ENCODE measurements at regions of chr2 and their contacts with region 1.

Region 1: GRCh38 chr2:204325468-204325867 is 219.8 kb upstream of the PARD3B start:
- DNase-seq: peak; percentile 58
- H3K4me3 ChIP-seq: no peak overlapping the region
- H3K27ac ChIP-seq: no peak overlapping the region
- H3K4me1 ChIP-seq: no peaks in the 10 kb centered on the region
- H3K27me3 ChIP-seq: no peaks in the 10 kb centered on the region
- CTCF ChIP-seq: peak; percentile 71 to 90 (median 88)
- POLR2A ChIP-seq: no peak

Region 2: DNA sequence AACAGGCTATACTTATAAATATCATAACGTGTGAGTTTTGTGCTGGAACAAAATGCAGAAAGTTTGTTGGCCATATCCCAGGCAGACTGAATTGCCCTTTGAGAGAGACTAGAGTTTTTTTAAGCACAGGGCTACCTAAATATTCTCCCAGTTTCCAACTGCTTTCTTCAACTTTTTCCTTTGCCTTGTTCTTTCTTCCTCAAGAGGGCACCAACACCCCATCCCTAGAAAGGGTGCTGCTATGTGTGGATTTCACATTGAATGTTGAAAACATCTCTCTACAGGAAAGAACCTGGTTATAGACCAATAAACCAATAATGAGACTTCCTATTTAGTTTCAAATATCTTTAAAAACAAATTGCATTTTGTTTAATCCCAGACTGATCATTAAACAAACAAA is 301.0 kb before region 1 on chr2:
- intact Hi-C with region 1: loop called (anchors 5 kb)
- DNase-seq: peak; percentile 37
- H3K4me3 ChIP-seq: no peak overlapping the region
- H3K27ac ChIP-seq: no peak overlapping the region
- H3K4me1 ChIP-seq: no peaks in the 10 kb centered on the region
- H3K27me3 ChIP-seq: no peaks in the 10 kb centered on the region
- CTCF ChIP-seq: peak in 3 of 4 experiments; percentile 40 to 72 (median 61)
- POLR2A ChIP-seq: no peak

Region 3: DNA sequence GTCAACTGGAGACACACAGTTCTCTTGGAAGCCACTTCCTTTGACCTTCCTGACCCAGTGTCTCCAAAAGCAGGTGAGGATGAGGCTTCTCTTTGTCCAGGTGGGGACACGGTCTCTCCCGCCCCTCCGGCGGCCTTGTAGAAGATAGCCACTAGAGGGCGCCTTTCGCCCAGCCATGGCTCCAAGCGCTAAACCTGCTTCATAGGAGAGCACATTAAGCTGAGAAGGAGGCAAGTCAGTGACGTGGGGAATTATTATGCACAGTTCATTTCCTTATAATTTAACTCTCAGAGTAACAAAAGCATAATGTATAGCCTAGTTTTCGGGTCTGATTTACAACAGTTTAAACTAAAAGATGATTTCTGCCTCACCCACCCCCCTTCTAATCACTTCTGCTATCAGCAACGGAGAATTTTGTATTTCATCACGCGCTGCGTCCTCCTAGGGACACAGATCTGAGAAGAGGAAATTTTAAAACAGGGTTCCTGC is 180.2 kb before region 1 on chr2:
- intact Hi-C with region 1: loop called (anchors 10 kb)
- DNase-seq: peak; percentile 67
- H3K4me3 ChIP-seq: peak overlapping the region; percentile 2 to 28
- H3K27ac ChIP-seq: peak overlapping the region in 1 of 2 donors; percentile 22
- H3K4me1 ChIP-seq: no peaks in the 10 kb centered on the region
- H3K27me3 ChIP-seq: no peaks in the 10 kb centered on the region
- CTCF ChIP-seq: peak; percentile 85 to 90 (median 88)
- POLR2A ChIP-seq: no peak

Region 4: GRCh38 chr2:204468746-204469429 is 143.4 kb after region 1 on chr2:
- intact Hi-C with region 1: no loop called
- DNase-seq: no peak
- H3K4me3 ChIP-seq: no peak overlapping the region
- H3K27ac ChIP-seq: no peak overlapping the region
- H3K4me1 ChIP-seq: no peaks in the 10 kb centered on the region
- H3K27me3 ChIP-seq: no peaks in the 10 kb centered on the region
- CTCF ChIP-seq: no peak
- POLR2A ChIP-seq: no peak

Region 5: GRCh38 chr2:204691911-204692510 is 366.5 kb after region 1 on chr2:
- intact Hi-C with region 1: loop called (anchors 5 kb)
- DNase-seq: peak; percentile 53
- H3K4me3 ChIP-seq: no peak overlapping the region
- H3K27ac ChIP-seq: no peak overlapping the region
- H3K4me1 ChIP-seq: no peaks in the 10 kb centered on the region
- H3K27me3 ChIP-seq: no peaks in the 10 kb centered on the region
- CTCF ChIP-seq: peak; percentile 44 to 72 (median 54)
- POLR2A ChIP-seq: no peak

Region 6: GRCh38 chr2:204885747-204886146 is 560.3 kb after region 1 on chr2:
- intact Hi-C with region 1: loop called (anchors 10 kb)
- DNase-seq: no peak
- H3K4me3 ChIP-seq: no peak overlapping the region
- H3K27ac ChIP-seq: no peak overlapping the region
- H3K4me1 ChIP-seq: no peaks in the 10 kb centered on the region
- H3K27me3 ChIP-seq: no peaks in the 10 kb centered on the region
- CTCF ChIP-seq: no peak
- POLR2A ChIP-seq: no peak

Region 7: GRCh38 chr2:205925373-205926337 is 1600.2 kb after region 1 on chr2:
- intact Hi-C with region 1: loop called (anchors 10 kb)
- DNase-seq: peak; percentile 70
- H3K4me3 ChIP-seq: no peak overlapping the region
- H3K27ac ChIP-seq: peak overlapping the region in 1 of 2 donors; percentile 42
- H3K4me1 ChIP-seq: no peaks in the 10 kb centered on the region
- H3K27me3 ChIP-seq: no peaks in the 10 kb centered on the region
- CTCF ChIP-seq: peak; percentile 81 to 93 (median 92)
- POLR2A ChIP-seq: no peak